ENCODE measurements at regions of chr14 and their contacts with region 1.

Region 1: GRCh38 chr14:76829013-76829365 is 2.8 kb downstream of the LRRC74A start:
- DNase-seq: no peak
- ATAC-seq: no peak
- H3K4me3 ChIP-seq: no peak overlapping the region
- H3K27ac ChIP-seq: no peak overlapping the region
- H3K4me1 ChIP-seq: no peaks in the 10 kb centered on the region
- H3K27me3 ChIP-seq: no peaks in the 10 kb centered on the region
- CTCF ChIP-seq: no peak

Region 2: DNA sequence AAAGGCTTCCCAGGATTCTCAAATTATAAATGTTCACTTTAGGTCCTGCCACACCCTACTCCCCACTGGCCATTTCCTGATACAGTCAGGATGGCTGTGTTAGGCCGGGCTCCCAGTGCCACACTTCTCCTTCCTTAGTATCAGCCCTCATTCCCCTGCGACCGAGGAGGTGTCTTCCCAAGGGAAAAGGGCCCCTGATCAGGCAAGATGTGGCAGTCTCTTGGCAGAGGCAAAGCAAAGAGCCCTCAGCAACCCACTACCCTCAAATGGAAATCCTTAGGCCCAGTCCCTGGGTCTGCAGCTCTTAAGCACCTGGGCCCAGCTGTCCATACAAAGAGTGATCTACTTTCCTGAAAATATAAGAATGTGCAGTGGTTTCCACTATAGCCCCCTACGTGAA is 164.2 kb before region 1 on chr14:
- CTCF ChIA-PET with region 1: interaction called, 11 read pairs
- POLR2A ChIA-PET with region 1: no interaction called
- in situ Hi-C with region 1: no loop called
- intact Hi-C with region 1: no loop called
- DNase-seq: no peak
- ATAC-seq: no peak
- H3K4me3 ChIP-seq: no peak overlapping the region
- H3K27ac ChIP-seq: no peak overlapping the region
- H3K4me1 ChIP-seq: no peaks in the 10 kb centered on the region
- H3K27me3 ChIP-seq: no peaks in the 10 kb centered on the region
- CTCF ChIP-seq: no peak